ENCODE measurements at regions of chr9 and their contacts with region 1.

Region 1: DNA sequence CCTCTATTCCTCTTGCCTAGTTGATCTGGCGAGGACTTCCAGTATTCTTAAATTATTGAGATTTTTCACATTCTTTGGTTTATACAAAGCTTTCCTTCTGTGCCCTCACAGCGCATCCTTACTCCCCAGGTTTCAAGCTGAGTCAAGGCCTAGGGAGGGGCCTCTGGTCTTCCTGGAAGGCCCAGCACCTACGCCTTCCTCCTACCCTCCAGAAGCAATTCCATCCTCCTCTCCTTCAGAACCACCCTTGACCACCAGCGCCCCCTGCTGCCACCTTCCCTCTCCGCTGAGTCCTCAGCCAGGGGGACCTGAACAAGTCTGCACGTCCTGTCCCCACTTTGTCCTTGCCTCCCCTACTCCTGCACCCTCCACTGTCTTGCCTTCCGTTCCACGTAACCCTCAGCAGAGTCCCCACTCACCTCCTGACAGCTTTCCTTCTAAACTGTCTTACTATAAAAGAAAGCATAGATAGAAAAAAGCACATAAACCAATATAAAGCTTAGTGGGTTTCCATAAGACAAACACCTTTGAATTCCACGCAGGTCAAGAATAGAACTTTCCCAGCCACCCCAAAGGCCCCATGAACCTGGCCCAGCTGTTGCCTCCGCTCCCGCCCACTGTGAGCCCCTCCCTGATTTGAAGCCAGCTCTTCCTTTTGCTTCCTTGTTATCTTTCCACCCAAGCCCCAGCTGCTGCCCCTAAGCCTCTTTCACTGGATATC is 63.0 kb upstream of the CTSL start:
- DNase-seq: peak; percentile 72
- H3K4me3 ChIP-seq: no peak overlapping the region
- H3K27ac ChIP-seq: no peak overlapping the region
- H3K4me1 ChIP-seq: no peaks in the 10 kb centered on the region
- H3K27me3 ChIP-seq: no peaks in the 10 kb centered on the region
- CTCF ChIP-seq: peak; percentile 71 to 81 (median 80)
- POLR2A ChIP-seq: no peak

Region 2: DNA sequence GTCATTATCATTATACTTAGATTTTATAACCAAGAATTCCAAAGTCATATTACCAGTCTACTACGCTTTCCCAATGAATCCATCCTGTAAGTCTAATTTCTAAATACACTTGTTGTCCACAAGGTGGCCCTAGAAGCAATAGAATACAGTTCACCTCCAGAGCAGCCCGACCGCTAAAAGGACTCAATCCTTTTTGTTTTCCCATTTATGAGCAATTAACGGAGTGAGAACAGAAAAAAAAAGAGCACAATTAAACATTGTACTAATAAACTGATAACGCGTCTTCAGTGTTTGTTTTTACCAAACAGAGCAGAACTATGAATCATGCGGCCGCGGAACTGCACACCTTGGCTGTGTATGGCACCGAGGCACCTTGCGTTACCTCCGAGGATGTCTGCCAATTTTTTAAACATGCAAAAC is 326.0 kb before region 1 on chr9:
- intact Hi-C with region 1: loop called (anchors 2 kb)
- DNase-seq: peak; percentile 31
- H3K4me3 ChIP-seq: peak overlapping the region; percentile 14 to 17
- H3K27ac ChIP-seq: no peak overlapping the region
- H3K4me1 ChIP-seq: no peaks in the 10 kb centered on the region
- H3K27me3 ChIP-seq: no peaks in the 10 kb centered on the region
- CTCF ChIP-seq: peak; percentile 52 to 86 (median 78)
- POLR2A ChIP-seq: no peak

Region 3: GRCh38 chr9:87535817-87536539 is 127.0 kb before region 1 on chr9:
- intact Hi-C with region 1: no loop called
- DNase-seq: no peak
- H3K4me3 ChIP-seq: no peak overlapping the region
- H3K27ac ChIP-seq: no peak overlapping the region
- H3K4me1 ChIP-seq: no peaks in the 10 kb centered on the region
- H3K27me3 ChIP-seq: no peaks in the 10 kb centered on the region
- CTCF ChIP-seq: no peak
- POLR2A ChIP-seq: no peak

Region 4: GRCh38 chr9:87751869-87752268 is 88.9 kb after region 1 on chr9:
- intact Hi-C with region 1: no loop called
- DNase-seq: no peak
- H3K4me3 ChIP-seq: no peak overlapping the region
- H3K27ac ChIP-seq: no peak overlapping the region
- H3K4me1 ChIP-seq: no peaks in the 10 kb centered on the region
- H3K27me3 ChIP-seq: no peaks in the 10 kb centered on the region
- CTCF ChIP-seq: no peak
- POLR2A ChIP-seq: no peak

Region 5: GRCh38 chr9:87766703-87767102 is 103.7 kb after region 1 on chr9:
- intact Hi-C with region 1: no loop called
- DNase-seq: peak; percentile 63
- H3K4me3 ChIP-seq: no peak overlapping the region
- H3K27ac ChIP-seq: no peak overlapping the region
- H3K4me1 ChIP-seq: no peaks in the 10 kb centered on the region
- H3K27me3 ChIP-seq: no peaks in the 10 kb centered on the region
- CTCF ChIP-seq: no peak
- POLR2A ChIP-seq: no peak

Measured in prostate gland (tissue), 2 donors.